ENCODE measurements at regions of chr7 and their contacts with region 1.

Region 1: GRCh38 chr7:105387621-105388372 is 924 bp downstream of the SRPK2 start:
- DNase-seq: peak; percentile 87
- H3K4me3 Mint-ChIP-seq: peak overlapping the region; percentile 92
- H3K27ac Mint-ChIP-seq: peak overlapping the region; percentile 72
- H3K4me1 Mint-ChIP-seq: peaks cover 23% of the 10 kb centered on the region
- H3K27me3 Mint-ChIP-seq: peaks cover 2% of the 10 kb centered on the region

Region 2: GRCh38 chr7:105309235-105310169 is 78.3 kb before region 1 on chr7:
- intact Hi-C with region 1: loop called (anchors 2 kb)
- DNase-seq: no peak
- H3K4me3 Mint-ChIP-seq: no peak overlapping the region
- H3K27ac Mint-ChIP-seq: no peak overlapping the region
- H3K4me1 Mint-ChIP-seq: peaks cover 46% of the 10 kb centered on the region
- H3K27me3 Mint-ChIP-seq: no peaks in the 10 kb centered on the region

Region 3: DNA sequence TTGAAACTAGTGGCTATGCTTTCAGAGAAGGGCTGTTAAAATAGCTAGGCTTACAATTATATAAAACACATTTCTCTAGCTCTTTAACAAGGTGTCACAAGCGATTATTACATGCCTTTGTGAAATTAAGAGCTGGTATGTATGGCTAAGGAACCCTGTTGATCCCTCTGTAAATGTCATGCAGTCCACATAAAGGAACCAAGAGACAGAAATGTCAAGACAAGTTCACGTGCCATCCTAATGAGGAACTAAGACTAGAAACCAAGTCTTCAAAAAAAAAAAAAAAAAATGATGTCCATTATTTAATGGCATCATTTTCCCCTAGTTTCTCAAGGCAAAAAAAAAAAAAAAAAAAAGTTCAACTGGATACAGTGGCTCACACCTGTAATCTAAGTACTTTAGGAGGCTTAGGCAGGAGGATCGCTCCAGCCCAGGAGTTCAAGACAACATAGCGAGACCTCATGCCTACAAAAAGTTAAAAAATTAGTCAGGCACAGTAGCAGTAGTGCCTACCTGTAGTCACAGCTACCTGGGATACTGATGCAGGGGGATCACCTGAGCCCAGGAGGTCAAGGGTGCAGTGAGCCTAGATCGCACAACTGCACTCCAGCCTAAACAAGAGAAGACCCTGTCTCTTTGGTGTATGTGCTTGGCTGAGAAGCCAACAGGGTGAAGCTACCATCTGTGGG is 62.4 kb before region 1 on chr7:
- intact Hi-C with region 1: no loop called
- DNase-seq: no peak
- H3K4me3 Mint-ChIP-seq: no peak overlapping the region
- H3K27ac Mint-ChIP-seq: no peak overlapping the region
- H3K4me1 Mint-ChIP-seq: peaks cover 19% of the 10 kb centered on the region
- H3K27me3 Mint-ChIP-seq: no peaks in the 10 kb centered on the region

Region 4: DNA sequence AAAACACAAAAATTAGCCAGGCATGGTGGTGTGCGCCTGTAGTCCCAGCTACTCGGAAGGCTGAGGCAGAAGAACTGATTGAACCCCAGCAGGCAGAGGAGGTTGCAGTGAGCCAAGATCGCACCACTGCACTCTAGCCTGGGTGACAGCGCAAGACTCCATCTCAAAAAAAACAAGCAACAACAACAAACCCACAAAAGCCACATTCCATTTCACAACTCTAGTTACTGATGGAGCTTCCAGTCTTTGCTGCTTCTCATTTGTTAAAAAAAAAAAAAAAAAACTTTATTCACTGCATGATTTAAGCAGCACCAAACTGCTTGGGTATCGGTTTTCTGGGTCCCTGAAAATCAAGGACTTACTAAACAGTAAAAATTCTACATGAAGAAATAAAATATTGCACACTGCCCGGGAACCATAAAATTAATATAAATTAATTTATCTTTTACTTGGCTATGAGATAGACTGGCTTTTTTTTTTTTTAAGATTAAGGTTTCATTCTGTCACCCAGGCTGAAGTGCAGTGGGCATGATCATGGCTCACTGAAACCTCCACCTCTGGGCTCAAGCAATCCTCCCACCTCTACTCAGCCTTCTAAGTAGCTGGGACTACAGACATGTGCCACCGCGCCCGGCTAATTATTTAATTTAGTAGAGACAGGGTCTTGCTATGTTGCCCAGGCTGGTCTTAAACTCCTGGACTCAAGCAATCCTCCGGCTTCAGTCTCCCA is 41.0 kb before region 1 on chr7:
- intact Hi-C with region 1: loop called (anchors 2 kb)
- DNase-seq: peak; percentile 81
- H3K4me3 Mint-ChIP-seq: peak overlapping the region; percentile 56
- H3K27ac Mint-ChIP-seq: peak overlapping the region; percentile 60
- H3K4me1 Mint-ChIP-seq: peaks cover 42% of the 10 kb centered on the region
- H3K27me3 Mint-ChIP-seq: no peaks in the 10 kb centered on the region

Region 5: GRCh38 chr7:105352018-105352612 is 35.7 kb before region 1 on chr7:
- intact Hi-C with region 1: loop called (anchors 2 kb)
- DNase-seq: peak; percentile 88
- H3K4me3 Mint-ChIP-seq: peak overlapping the region; percentile 72
- H3K27ac Mint-ChIP-seq: peak overlapping the region; percentile 87
- H3K4me1 Mint-ChIP-seq: peaks cover 46% of the 10 kb centered on the region
- H3K27me3 Mint-ChIP-seq: no peaks in the 10 kb centered on the region

Region 6: DNA sequence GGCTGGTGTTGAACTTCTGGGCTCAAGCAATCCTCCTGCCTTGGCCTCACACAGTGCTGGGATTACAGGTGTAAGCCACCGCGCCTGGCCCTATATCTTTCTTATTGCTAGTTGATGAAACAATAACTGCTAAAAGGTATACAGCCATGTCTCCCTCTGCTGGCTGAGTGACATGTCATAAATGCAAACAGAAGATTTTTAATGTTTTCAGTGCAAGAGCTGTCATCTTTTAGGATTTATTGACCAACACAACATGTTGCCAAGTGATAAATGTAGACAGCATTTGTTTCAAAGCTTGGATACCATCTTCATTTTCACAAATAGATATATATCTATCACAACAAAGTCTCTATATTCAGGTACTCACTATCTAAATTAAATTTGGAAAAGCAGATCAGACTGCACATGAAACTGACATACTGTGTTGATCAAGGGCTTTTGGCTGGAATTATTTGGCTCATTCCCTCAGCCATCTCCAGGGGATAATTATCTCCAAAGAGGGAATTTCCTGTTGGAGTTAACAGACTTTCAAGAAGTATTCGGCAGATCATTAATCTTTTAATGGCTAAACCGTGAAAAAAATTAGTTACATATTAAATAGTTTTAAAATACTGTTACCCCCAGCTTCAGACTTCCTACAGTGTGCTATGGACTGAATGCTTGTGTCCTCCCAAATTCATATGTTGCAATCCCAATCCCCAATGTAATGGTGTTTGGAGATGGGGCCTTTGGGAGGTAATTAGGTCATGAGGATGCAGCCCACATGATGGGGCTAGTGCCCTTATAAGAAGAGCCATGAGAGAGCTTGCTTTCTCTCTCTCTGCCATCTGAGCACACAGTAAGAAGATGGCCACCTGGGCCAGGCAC is 42.2 kb after region 1 on chr7:
- intact Hi-C with region 1: loop called (anchors 5 kb)
- DNase-seq: peak; percentile 83
- H3K4me3 Mint-ChIP-seq: no peak overlapping the region
- H3K27ac Mint-ChIP-seq: no peak overlapping the region
- H3K4me1 Mint-ChIP-seq: peaks cover 6% of the 10 kb centered on the region
- H3K27me3 Mint-ChIP-seq: no peaks in the 10 kb centered on the region

Region 7: DNA sequence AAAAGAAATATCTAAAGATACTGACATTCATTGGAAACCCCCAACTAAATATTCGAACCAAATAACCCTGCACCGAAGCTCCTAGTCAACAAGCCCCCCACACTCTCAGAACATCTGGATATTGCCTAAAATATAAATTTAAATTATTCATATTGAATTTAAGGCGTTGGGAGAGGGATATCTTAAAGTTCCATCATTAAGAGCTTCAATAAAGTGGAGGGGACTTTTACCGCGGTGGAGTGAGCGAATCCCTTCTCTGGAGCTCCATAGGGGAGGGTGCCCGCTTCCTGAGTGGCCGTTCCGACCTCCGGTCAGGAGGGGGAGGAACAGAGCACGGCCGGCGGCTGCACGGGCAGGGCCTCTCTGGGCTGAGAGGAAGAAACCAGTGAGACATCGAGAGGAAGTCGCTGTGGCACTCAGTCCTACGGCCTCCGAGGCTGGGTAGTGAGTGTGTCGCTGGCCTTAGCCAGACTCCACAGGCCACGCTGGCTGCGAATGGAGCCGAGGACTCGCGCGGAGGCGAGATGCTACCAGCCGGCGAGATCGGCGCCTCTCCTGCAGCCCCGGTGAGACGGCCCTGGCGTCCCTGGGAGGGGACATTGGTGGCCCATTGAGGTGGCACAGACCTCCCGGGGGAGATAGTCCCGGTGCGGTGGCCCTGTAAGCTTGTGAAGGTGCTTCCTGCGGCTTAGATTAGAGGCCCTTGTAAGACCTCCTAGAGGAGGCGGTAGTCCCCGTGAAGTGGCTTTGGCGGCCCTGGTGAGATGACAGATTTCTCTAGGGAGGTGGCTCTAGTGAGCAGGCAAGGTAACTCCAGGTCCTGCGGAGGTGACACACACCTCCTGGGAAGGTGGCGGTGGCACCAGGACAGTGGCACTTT is 144.2 kb after region 1 on chr7 and contains the start of gene RINT1:
- intact Hi-C with region 1: loop called (anchors 5 kb)
- DNase-seq: peak; percentile 97
- H3K4me3 Mint-ChIP-seq: peak within 1 kb of the TSS; percentile 93
- H3K27ac Mint-ChIP-seq: peak within 1 kb of the TSS; percentile 93
- H3K4me1 Mint-ChIP-seq: peaks cover 25% of the 10 kb centered on the region
- H3K27me3 Mint-ChIP-seq: no peaks in the 10 kb centered on the region
- total RNA-seq, gene RINT1: 28.5 and 29.4 TPM in 2 replicates

Measured in activated CD4-positive, alpha-beta T cell treated with anti-CD3 and anti-CD28 coated beads, Interleukin-2, amount 10 ng/mL, durations not matched to agents 24 days and 14 days (primary cell).